ENCODE measurements at regions of chr3 and their contacts with region 1.

Region 1: DNA sequence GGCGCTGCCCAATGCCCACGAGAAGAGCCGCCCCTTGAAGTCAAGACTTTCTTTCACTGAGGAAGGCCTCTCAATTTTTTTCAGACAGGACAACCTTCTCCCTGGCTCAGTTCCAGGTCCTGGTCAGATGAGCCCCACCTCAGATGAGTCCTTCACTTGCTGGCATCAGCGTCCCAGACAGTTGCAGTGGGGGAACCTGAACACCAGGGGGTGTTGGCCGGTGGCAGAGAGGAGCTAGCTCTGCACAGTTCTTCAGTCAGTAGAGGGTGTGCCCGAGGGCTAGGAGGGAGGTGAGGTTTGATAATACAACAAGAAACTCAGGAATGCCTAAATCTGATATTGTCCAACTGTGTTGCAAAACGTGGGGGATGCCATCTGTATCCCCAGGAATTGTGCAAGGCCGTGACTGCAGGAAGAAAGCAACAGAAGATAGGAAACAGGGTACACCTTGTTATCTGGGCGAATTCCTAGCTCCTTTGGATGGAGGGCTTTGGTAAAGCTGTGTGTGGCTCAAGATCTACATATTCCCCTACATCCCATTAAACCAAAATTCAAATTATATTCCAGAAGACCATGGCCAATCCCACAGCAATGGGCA is 34.3 kb downstream of the CCR3 start:
- DNase-seq: peak; percentile 59
- ATAC-seq: peak; percentile 87

Region 2: GRCh38 chr3:46372492-46373359 is 96.1 kb after region 1 on chr3:
- intact Hi-C with region 1: loop called (anchors 5 kb)
- DNase-seq: no peak
- ATAC-seq: no peak